Panc1 (cell line): ENCODE measurements at regions of chr16 and their contacts with region 1.

Region 1: GRCh38 chr16:24540602-24541210 is 1.3 kb downstream of the RBBP6 start:
- DNase-seq: no peak
- ATAC-seq: no peak
- H3K4me3 ChIP-seq: peak overlapping the region; percentile 93 to 96
- H3K27ac ChIP-seq: peak overlapping the region; percentile 94
- H3K4me1 ChIP-seq: peaks cover 21% of the 10 kb centered on the region
- H3K27me3 ChIP-seq: no peaks in the 10 kb centered on the region
- CTCF ChIP-seq: no peak

Region 2: GRCh38 chr16:24409049-24409448 is 131.7 kb before region 1 on chr16:
- CTCF ChIA-PET with region 1: no interaction called
- POLR2A ChIA-PET with region 1: no interaction called
- in situ Hi-C with region 1: no loop called
- intact Hi-C with region 1: no loop called
- DNase-seq: no peak
- ATAC-seq: no peak; the same call in 1 of the 2 replicates
- H3K4me3 ChIP-seq: no peak overlapping the region
- H3K27ac ChIP-seq: no peak overlapping the region
- H3K4me1 ChIP-seq: no peaks in the 10 kb centered on the region
- H3K27me3 ChIP-seq: no peaks in the 10 kb centered on the region
- CTCF ChIP-seq: peak; percentile 56

Region 3: DNA sequence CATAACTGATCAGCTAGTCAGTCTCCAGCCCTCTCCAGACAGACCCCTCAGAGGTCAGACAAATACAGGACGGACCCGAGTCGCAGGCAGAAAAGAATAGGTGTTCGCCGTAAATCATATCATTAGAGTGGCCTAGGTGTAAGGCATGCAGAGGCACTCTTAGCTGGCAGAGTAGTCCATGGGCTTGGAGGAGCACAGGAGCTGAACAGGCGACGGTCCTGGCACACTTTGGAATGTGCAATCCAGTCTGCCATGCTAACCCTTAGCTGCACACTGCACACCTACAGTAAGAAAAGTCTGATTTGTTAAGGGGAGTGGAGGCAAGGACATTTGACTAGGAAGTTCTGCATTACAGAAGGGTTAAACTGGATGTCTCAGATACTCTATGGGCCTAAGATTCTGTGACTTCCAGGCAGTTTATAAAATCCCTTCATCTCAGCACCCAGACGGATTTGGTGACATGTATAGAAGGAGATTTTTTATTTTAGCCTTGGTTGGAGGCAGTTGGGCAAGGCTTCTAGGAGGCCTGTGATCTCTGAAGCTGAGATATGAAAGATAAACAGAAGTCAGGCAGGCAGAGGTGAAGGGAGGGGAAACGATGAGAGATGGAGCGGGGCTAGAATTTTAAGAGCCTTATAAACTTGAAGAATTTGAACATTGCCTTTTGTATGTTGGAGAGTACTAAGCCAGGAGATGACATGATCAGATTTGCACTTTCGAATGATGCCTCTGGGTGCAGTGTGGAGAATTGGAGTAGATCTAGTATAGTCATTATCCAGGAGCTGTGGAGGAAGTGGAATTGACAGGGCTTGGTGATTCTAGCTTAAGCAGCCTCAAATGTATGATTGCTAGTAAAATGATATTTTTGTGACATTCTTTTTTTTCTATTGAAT is 270.5 kb after region 1 on chr16:
- CTCF ChIA-PET with region 1: no interaction called
- POLR2A ChIA-PET with region 1: interaction called, 11 read pairs
- in situ Hi-C with region 1: no loop called
- intact Hi-C with region 1: no loop called
- DNase-seq: no peak
- ATAC-seq: peak; percentile 54; the same call in 1 of the 2 replicates
- H3K4me3 ChIP-seq: no peak overlapping the region
- H3K27ac ChIP-seq: no peak overlapping the region
- H3K4me1 ChIP-seq: no peaks in the 10 kb centered on the region
- H3K27me3 ChIP-seq: no peaks in the 10 kb centered on the region
- CTCF ChIP-seq: no peak